ENCODE measurements at regions of chr3 and their contacts with region 1.

Region 1: GRCh38 chr3:156050918-156051317 is 69.5 kb upstream of the KCNAB1 start:
- DNase-seq: no peak
- H3K4me3 ChIP-seq: no peak overlapping the region
- H3K27ac ChIP-seq: no peak overlapping the region
- H3K4me1 ChIP-seq: no peaks in the 10 kb centered on the region
- CTCF ChIP-seq: no peak

Region 2: GRCh38 chr3:155846119-155846518 is 204.8 kb before region 1 on chr3:
- CTCF ChIA-PET with region 1: no interaction called
- POLR2A ChIA-PET with region 1: no interaction called
- intact Hi-C with region 1: no loop called
- DNase-seq: no peak
- H3K4me3 ChIP-seq: no peak overlapping the region
- H3K27ac ChIP-seq: no peak overlapping the region
- H3K4me1 ChIP-seq: peaks cover 9% of the 10 kb centered on the region
- CTCF ChIP-seq: no peak

Region 3: GRCh38 chr3:156014489-156014888 is 36.4 kb before region 1 on chr3:
- CTCF ChIA-PET with region 1: no interaction called
- POLR2A ChIA-PET with region 1: no interaction called
- intact Hi-C with region 1: no loop called
- DNase-seq: no peak
- H3K4me3 ChIP-seq: no peak overlapping the region
- H3K27ac ChIP-seq: no peak overlapping the region
- H3K4me1 ChIP-seq: no peaks in the 10 kb centered on the region
- CTCF ChIP-seq: no peak

Region 4: DNA sequence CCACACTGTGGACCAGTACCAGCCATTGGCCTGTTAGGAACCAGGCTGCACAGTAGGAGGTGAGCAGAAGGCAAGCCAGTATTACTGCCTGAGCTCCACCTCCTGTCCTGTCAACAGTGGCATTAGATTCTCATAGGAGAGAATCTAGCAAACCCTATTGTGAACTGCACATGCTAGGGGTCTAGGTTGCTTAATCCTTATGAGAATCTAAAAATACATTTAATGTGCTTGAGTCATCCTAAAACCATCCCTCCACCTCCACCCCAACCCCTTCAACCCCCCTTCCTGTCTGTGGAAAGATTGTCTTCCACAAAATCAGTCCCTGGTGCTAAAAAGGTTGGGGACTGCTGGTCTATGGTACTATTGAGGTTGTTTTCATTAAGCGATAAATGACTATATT is 20.1 kb after region 1 on chr3:
- CTCF ChIA-PET with region 1: no interaction called
- POLR2A ChIA-PET with region 1: interaction called, 11 read pairs
- intact Hi-C with region 1: no loop called
- DNase-seq: no peak
- H3K4me3 ChIP-seq: no peak overlapping the region
- H3K27ac ChIP-seq: no peak overlapping the region
- H3K4me1 ChIP-seq: no peaks in the 10 kb centered on the region
- CTCF ChIP-seq: no peak